Mammary epithelial cell (primary cell): ENCODE measurements at regions of chr11 and their contacts with region 1.

Region 1: DNA sequence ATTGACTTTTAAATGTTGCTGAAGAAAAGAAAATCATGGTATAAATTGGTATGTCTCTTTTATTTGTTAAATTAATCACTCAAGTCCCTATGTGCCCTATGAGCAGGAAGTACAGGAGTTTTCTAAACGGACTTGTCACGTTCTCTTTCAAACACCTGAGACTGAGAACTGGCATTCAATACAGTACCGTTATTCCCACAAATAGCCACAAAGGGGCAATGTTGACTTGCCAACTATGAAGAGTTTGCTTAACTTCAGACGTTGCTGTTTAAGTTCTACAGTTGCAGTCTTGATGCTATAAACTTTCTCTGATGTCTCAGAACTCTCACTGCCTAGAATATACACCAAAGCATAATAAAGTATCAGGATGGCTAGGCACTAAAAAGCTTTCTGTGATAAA is 7.6 kb downstream of the OR56A1 start:
- DNase-seq: peak; percentile 40
- H3K4me3 ChIP-seq: no peak overlapping the region
- H3K27ac ChIP-seq: no peak overlapping the region
- H3K4me1 ChIP-seq: no peaks in the 10 kb centered on the region
- H3K27me3 ChIP-seq: no peaks in the 10 kb centered on the region
- CTCF ChIP-seq: peak; percentile 50 to 73

Region 2: GRCh38 chr11:6362873-6363678 is 340.1 kb after region 1 on chr11:
- CTCF ChIA-PET with region 1: interaction called, 6 read pairs
- dilution Hi-C with region 1: no loop called
- in situ Hi-C with region 1: loop called in 1 of 2 experiments (anchors 10 kb)
- intact Hi-C with region 1: loop called (anchors 1 kb)
- DNase-seq: peak; percentile 68
- H3K4me3 ChIP-seq: no peak overlapping the region
- H3K27ac ChIP-seq: no peak overlapping the region
- H3K4me1 ChIP-seq: no peaks in the 10 kb centered on the region
- H3K27me3 ChIP-seq: no peaks in the 10 kb centered on the region
- CTCF ChIP-seq: peak; percentile 98 to 99

Region 3: DNA sequence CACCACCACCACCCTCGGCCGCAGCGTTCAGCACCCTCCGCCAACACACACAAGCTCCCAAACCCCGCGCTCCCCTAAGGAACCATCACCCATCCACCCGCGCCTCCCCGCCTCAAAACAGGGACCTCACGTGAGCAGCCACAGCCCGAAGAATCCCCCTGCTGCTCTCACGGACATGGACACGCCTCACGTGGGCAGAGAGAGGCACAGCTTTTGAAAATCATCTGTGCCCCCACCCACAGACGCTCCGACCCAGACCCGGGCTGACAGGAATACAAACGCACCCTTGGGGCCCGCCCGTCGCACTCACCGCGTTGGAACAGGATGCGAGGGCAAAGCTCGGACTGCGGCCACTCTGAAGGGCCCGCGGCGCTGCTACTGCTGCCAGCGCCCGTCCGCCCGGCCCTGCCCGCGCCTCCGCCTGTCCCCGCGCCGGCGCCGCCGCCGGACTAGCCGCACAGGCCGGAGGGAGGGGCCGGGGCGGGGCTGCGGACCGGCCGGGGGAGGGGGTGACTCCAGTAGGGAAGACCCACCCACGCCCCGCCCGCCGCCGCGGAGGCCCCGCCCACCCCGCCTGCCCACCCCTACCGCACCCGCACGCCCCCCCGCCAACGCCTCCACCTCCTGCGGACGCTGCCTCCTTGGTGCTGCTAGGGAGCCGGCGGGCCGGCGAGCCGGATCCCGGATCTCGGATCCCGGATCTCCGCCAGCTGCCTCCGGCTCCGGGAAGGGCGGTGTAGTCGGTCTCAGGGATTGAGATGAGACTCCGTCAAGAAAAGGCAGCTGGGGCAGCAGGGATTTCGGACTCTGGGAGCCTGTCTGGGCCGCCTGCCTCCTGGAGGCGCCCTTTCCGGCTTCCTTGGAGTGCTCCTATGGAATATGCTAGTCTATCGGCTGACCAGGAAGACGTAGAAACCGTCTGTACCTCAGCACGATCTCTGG is 450.8 kb after region 1 on chr11 and contains the start of gene TRIM3:
- CTCF ChIA-PET with region 1: interaction called, 14 read pairs
- dilution Hi-C with region 1: no loop called
- in situ Hi-C with region 1: no loop called
- intact Hi-C with region 1: no loop called
- DNase-seq: peak; percentile 82
- H3K4me3 ChIP-seq: peak within 1 kb of the TSS; percentile 62 to 80 (median 70)
- H3K27ac ChIP-seq: peak within 1 kb of the TSS; percentile 66
- H3K4me1 ChIP-seq: peaks cover 17% of the 10 kb centered on the region
- H3K27me3 ChIP-seq: no peaks in the 10 kb centered on the region
- CTCF ChIP-seq: peak in 1 of 2 donors; percentile 49
- total RNA-seq, gene TRIM3: 9.3 to 20.8 TPM